ENCODE measurements at regions of chr7 and their contacts with region 1.

Region 1: DNA sequence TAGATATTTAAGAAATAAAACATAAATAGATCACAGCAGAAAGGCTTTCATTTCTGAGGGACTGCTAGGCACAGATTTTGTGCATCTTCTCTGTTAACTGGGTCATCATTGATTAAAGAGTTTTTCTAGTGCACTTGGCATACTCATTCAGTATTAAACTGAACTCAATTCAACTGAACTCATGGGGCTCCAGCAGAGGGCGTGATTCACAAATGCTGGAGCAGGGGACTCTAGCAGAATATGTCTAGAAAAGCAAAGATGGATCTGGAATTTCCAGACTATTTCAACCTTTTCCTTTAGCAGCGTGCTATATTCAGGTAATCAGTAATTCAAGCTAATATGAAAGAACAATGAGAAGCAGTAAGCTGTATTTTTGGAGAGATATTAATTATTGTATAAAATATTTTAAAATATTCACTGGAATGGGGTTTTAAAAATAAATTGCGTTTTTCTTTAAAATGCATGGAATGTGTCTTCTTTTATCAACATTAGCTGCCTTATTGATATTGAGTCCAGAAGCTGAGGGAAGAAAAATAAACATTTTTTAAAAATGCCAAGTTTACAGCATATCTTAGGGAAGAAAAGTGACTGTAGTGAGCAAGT is 296.8 kb upstream of the CACNA2D1 start:
- DNase-seq: peak; percentile 73
- ATAC-seq: peak; percentile 84
- H3K4me3 ChIP-seq: no peak overlapping the region
- H3K27ac ChIP-seq: no peak overlapping the region
- H3K4me1 ChIP-seq: no peaks in the 10 kb centered on the region
- H3K27me3 ChIP-seq: no peaks in the 10 kb centered on the region
- CTCF ChIP-seq: peak; percentile 82

Region 2: DNA sequence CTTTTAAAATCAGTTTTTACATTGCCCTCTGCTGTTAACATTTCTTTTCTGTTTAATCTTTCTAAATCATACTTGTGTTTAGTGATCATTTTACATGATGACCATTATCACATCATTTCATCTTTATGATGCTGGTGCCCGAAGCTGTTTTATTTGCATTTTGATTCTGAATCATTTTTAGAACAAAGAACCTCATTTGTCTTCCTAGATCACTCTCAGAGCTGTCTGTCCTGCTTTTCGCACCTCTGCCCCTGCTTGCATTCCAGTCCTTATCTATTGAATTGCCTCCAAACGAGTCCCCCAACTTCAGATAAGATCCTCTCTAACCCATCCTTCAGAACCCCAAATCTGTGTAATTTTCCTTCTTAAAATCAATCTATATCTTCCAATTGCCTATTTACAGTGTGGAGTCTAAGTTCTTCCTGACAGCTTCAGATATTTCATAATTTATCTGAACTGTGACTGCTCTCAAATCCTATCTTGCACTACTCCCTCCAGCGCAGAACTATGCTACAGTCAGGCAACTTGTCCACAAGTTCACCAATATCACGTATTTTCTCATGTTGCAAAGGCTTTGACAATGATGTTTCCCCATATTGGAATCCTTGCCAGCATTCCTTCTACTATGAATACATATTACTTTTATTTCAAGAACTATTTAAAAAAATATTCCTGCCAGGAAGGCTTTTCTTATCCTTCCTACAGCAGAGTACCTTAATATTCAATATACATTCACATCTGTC is 49.7 kb after region 1 on chr7:
- CTCF ChIA-PET with region 1: no interaction called
- POLR2A ChIA-PET with region 1: no interaction called
- intact Hi-C with region 1: loop called (anchors 1 kb)
- DNase-seq: peak; percentile 37
- ATAC-seq: peak; percentile 79
- H3K4me3 ChIP-seq: no peak overlapping the region
- H3K27ac ChIP-seq: no peak overlapping the region
- H3K4me1 ChIP-seq: peaks cover 8% of the 10 kb centered on the region; the same call in 1 of the 2 replicates
- H3K27me3 ChIP-seq: no peaks in the 10 kb centered on the region
- CTCF ChIP-seq: no peak; the same call in 1 of the 2 replicates

Region 3: GRCh38 chr7:83072576-83073517 is 332.5 kb after region 1 on chr7:
- CTCF ChIA-PET with region 1: no interaction called
- POLR2A ChIA-PET with region 1: no interaction called
- intact Hi-C with region 1: loop called (anchors 1 kb)
- DNase-seq: peak; percentile 55
- ATAC-seq: peak; percentile 71
- H3K4me3 ChIP-seq: no peak overlapping the region
- H3K27ac ChIP-seq: no peak overlapping the region
- H3K4me1 ChIP-seq: no peaks in the 10 kb centered on the region
- H3K27me3 ChIP-seq: no peaks in the 10 kb centered on the region
- CTCF ChIP-seq: peak; percentile 69

Region 4: GRCh38 chr7:83365746-83366145 is 625.4 kb after region 1 on chr7:
- CTCF ChIA-PET with region 1: interaction called, 3 read pairs
- POLR2A ChIA-PET with region 1: no interaction called
- intact Hi-C with region 1: loop called (anchors 1 kb)
- DNase-seq: peak; percentile 19
- ATAC-seq: peak; percentile 43; the same call in 1 of the 2 replicates
- H3K4me3 ChIP-seq: no peak overlapping the region
- H3K27ac ChIP-seq: no peak overlapping the region
- H3K4me1 ChIP-seq: no peaks in the 10 kb centered on the region
- H3K27me3 ChIP-seq: no peaks in the 10 kb centered on the region
- CTCF ChIP-seq: peak; percentile 45; the same call in 1 of the 2 replicates